A673 (cell line): ENCODE measurements at regions of chr4 and their contacts with region 1.

Region 1: DNA sequence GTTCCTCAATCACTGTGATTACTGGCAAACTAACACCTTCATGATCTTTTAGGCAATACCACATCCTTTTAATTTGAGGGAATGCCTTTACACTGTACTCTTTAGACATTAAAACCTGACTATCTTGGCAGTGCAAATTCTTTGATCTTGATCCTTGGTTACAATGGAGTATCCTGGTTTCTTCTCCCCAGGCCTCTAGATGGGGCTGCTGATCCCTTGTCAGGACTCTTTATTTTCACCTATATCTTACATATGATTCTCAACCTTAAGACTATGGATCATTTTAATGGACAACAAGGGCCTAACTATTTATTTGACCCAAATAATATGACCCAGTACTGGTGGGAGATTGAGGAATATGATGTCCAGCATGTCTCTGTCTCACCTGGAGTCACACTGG is 1005.5 kb upstream of the INTU start:
- DNase-seq: peak; percentile 48
- H3K4me3 ChIP-seq: no peak overlapping the region
- H3K27ac ChIP-seq: no peak overlapping the region
- H3K4me1 ChIP-seq: no peaks in the 10 kb centered on the region
- H3K27me3 ChIP-seq: no peaks in the 10 kb centered on the region
- CTCF ChIP-seq: peak; percentile 76

Region 2: DNA sequence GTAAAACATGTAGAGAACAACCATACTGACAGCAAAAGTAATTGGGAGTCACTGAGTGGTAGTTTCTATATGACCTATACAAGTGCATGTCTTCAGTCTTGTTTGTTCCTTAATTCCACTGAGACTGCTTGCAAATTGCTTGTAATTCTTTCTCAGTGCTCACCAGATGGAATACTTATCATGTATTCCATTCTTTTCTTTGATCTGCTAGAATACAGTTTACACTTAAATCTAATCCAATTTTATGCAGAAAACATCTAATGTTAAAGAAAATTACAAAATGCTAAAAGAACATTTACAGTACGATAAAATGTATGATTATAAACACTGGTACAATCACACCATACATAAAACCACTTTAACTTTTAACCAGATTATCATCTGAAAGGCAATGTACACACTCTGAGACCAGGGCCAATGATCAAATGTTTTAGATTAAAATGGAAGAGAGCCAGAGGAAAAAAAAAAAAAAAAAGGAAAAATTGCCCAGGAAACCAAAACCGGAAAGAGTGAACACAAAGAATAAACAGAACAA is 571.1 kb before region 1 on chr4:
- CTCF ChIA-PET with region 1: no interaction called
- POLR2A ChIA-PET with region 1: no interaction called
- intact Hi-C with region 1: no loop called
- DNase-seq: no peak
- H3K4me3 ChIP-seq: no peak overlapping the region
- H3K27ac ChIP-seq: no peak overlapping the region
- H3K4me1 ChIP-seq: peaks cover 9% of the 10 kb centered on the region
- H3K27me3 ChIP-seq: no peaks in the 10 kb centered on the region
- CTCF ChIP-seq: no peak

Region 3: DNA sequence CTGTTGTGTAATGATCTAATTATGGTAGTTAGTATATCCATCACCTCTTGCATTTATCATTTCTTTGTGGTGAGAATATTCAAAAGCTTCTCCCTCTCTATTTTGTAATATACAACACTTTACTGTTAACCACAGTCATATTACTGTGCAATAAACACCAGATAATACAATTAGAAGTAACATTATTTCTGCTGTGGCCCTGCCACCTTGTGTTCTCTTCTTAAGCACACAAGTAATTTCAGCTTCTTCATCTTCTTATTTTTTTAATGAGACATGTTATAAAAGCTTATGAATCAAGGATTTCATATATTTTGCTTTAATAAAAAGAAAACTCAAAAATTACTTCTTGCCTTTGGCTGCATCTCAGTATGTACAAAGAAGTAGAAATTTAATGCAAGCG is 330.3 kb after region 1 on chr4:
- CTCF ChIA-PET with region 1: no interaction called
- POLR2A ChIA-PET with region 1: no interaction called
- intact Hi-C with region 1: loop called (anchors 10 kb)
- DNase-seq: peak; percentile 34
- H3K4me3 ChIP-seq: no peak overlapping the region
- H3K27ac ChIP-seq: peak overlapping the region; percentile 1
- H3K4me1 ChIP-seq: peaks cover 24% of the 10 kb centered on the region
- H3K27me3 ChIP-seq: no peaks in the 10 kb centered on the region
- CTCF ChIP-seq: peak; percentile 43; the same call in 1 of the 2 replicates

Region 4: DNA sequence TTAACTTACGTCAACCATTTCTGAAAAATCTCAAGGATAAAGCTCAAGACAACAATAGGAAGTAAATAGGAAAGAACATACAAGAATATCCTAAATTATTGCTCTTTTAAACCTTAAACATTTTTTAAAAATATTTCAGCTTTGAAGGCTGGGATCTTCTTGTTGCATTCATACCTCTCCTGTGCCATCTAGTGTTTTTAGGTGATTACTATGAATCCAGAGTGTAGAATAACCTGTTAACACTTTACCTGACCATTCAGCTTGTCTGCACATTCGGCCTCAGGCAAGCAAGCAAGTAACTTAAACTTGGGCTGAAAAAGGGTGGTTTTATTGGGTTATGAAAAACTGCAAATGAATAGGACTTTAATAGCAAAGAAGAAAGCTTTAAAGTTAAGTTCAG is 497.7 kb after region 1 on chr4:
- CTCF ChIA-PET with region 1: no interaction called
- POLR2A ChIA-PET with region 1: no interaction called
- intact Hi-C with region 1: loop called (anchors 5 kb)
- DNase-seq: peak; percentile 10
- H3K4me3 ChIP-seq: no peak overlapping the region
- H3K27ac ChIP-seq: no peak overlapping the region
- H3K4me1 ChIP-seq: peaks cover 3% of the 10 kb centered on the region
- H3K27me3 ChIP-seq: no peaks in the 10 kb centered on the region
- CTCF ChIP-seq: peak; percentile 40; the same call in 1 of the 2 replicates

Region 5: DNA sequence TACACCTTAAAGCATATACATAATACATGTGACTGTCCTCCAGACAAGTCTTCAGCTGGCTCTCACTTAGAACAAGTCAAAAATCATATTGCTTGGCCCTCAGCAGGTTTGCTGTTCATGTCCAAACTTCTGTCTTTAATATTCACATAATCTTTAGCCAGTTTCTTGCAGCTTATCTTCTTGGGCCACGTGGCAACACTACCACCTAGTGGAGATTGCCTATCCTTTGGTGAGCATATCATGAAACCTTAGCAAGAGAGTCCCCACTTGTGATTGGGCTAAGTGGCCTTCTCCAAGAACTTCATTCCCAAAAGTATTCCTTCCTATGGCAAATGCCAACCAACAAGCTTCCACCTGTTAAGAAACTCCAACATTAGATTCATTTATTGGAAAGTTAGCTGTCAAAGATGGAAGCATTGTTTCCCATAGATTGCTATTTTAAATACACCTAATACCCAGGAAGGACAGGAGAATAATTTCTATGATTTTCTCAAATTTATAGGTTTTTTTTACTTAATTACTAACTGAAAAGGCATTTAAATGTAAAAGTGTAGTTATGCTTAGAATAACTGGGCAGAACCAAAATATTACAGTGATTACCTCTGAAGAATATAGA is 773.6 kb after region 1 on chr4:
- CTCF ChIA-PET with region 1: no interaction called
- POLR2A ChIA-PET with region 1: no interaction called
- intact Hi-C with region 1: loop called (anchors 10 kb)
- DNase-seq: peak; percentile 87
- H3K4me3 ChIP-seq: no peak overlapping the region
- H3K27ac ChIP-seq: no peak overlapping the region
- H3K4me1 ChIP-seq: peaks cover 5% of the 10 kb centered on the region
- H3K27me3 ChIP-seq: no peaks in the 10 kb centered on the region
- CTCF ChIP-seq: peak; percentile 83